ENCODE measurements at regions of chr12 and their contacts with region 1.

Region 1: DNA sequence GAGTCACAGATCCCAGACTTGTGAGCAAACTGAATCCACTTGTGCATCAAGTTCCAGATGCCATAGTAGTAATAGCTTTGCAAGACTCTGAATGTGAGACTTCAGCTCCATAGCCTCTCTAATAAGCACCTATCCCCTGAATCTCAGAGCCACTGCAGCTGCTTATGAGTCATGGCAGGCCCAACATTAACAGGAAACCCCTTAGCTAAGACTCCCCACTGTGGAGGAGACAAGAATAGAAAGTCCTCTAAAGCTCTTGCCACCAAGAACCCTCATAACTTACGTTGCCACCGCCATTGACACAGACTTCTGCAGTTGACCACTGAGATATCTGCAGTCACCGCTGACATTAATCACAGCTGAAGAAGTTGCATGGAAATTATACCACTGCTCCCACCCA is 62.9 kb upstream of the PDE3A start:
- DNase-seq: no peak

Region 2: GRCh38 chr12:19074700-19075099 is 1230.8 kb before region 1 on chr12:
- intact Hi-C with region 1: loop called in 1 of 2 experiments (anchors 5 kb)
- DNase-seq: no peak